MCF 10A (cell line): ENCODE measurements at regions of chr18 and their contacts with region 1.

Region 1: GRCh38 chr18:77000527-77000926 is 132.1 kb downstream of the MBP start:
- DNase-seq: peak; percentile 52
- H3K4me3 Mint-ChIP-seq: no peak overlapping the region
- H3K27ac Mint-ChIP-seq: no peak overlapping the region
- H3K4me1 Mint-ChIP-seq: no peaks in the 10 kb centered on the region
- H3K27me3 Mint-ChIP-seq: peaks cover 7% of the 10 kb centered on the region
- CTCF ChIP-seq: peak; percentile 89

Region 2: GRCh38 chr18:76892832-76893231 is 107.7 kb before region 1 on chr18:
- CTCF ChIA-PET with region 1: no interaction called
- POLR2A ChIA-PET with region 1: no interaction called
- intact Hi-C with region 1: no loop called
- DNase-seq: no peak
- H3K4me3 Mint-ChIP-seq: no peak overlapping the region
- H3K27ac Mint-ChIP-seq: no peak overlapping the region
- H3K4me1 Mint-ChIP-seq: no peaks in the 10 kb centered on the region
- H3K27me3 Mint-ChIP-seq: no peaks in the 10 kb centered on the region
- CTCF ChIP-seq: no peak

Region 3: DNA sequence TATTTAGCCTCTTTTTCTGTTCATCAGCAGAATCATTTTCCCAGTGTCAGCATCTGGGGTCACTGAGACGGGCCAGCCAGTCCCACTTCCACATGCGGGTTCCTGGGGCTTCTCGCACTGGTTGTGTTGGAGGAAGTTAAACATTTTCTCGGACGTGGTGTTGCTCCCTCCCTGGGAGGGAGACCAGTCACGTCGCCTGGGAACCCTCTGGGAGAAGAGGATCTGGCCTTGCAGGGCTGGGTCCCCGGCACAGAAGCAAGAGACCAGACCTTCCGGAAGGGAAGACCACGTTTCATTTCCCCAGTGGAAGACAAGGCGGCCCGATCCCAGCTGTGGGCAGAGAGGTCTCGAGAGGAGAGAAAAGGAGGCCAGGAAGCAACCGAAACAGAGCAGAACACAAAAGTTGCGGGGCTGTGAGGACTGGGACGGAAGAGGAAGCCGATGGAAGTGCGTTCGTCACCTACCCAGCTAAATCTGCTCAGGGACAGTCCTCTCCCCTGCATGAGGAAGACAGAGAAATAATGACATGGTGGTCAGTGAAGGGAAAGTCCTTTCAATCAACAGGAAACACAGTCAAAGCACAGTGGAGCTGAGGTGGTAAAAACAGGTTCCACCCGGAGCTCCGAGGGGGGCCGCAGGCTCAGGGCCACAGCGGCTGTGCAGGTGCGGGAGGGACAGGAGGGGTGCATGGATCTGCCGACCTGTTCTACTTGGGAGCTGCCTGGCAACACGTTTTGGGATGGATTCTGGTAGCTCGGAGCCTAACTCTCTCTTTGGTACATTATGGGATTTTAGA is 12.3 kb before region 1 on chr18:
- CTCF ChIA-PET with region 1: interaction called, 40 read pairs
- POLR2A ChIA-PET with region 1: no interaction called
- intact Hi-C with region 1: no loop called
- DNase-seq: no peak
- H3K4me3 Mint-ChIP-seq: no peak overlapping the region
- H3K27ac Mint-ChIP-seq: no peak overlapping the region
- H3K4me1 Mint-ChIP-seq: peaks cover 1% of the 10 kb centered on the region
- H3K27me3 Mint-ChIP-seq: peaks cover 22% of the 10 kb centered on the region
- CTCF ChIP-seq: no peak

Region 4: GRCh38 chr18:77067291-77068061 is 66.9 kb after region 1 on chr18:
- CTCF ChIA-PET with region 1: interaction called, 5 read pairs
- POLR2A ChIA-PET with region 1: interaction called, 4 read pairs
- intact Hi-C with region 1: loop called (anchors 2 kb)
- DNase-seq: peak; percentile 88
- H3K4me3 Mint-ChIP-seq: peak overlapping the region; percentile 40
- H3K27ac Mint-ChIP-seq: peak overlapping the region; percentile 88
- H3K4me1 Mint-ChIP-seq: peaks cover 50% of the 10 kb centered on the region
- H3K27me3 Mint-ChIP-seq: no peaks in the 10 kb centered on the region
- CTCF ChIP-seq: peak; percentile 17

Region 5: DNA sequence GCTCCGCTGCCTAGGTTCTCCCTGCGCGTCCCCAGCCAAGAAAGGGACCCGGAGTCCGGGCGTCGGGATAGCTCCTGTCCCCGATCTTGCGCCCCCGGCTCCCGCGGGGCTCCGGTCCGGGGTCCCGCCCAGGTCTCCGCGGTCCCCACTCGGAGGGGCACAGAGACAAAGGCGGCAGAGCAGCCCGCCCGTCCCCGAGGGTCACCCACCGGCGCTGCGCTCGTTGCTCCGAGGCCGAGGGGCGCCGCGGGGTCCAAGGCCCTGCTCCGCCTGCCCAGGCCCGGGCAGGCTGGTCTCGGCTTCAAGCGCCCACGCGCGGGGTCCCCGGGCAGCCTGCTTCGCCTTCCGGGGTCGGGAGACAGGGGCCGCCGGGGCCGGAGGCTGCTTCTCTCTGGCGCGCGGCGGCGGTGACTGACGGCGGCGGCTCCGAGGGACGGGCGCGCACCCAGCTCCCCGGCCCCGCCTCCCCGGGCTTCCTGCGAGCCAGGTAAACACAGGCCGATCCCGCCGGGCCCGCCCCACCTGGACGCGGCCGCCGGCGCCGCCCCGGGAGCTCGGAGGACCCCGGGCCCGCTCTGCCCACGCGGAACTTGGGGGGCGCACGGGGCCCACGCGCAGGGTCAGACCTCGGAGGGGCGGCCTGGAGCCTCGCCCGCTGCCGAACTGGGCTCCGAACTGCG is 132.0 kb after region 1 on chr18 and contains the start of gene MBP:
- CTCF ChIA-PET with region 1: interaction called, 4 read pairs
- POLR2A ChIA-PET with region 1: interaction called, 8 read pairs
- intact Hi-C with region 1: loop called (anchors 5 kb)
- DNase-seq: peak; percentile 73
- H3K4me3 Mint-ChIP-seq: peak within 1 kb of the TSS; percentile 82
- H3K27ac Mint-ChIP-seq: no peak within 1 kb of the TSS
- H3K4me1 Mint-ChIP-seq: peaks cover 16% of the 10 kb centered on the region
- H3K27me3 Mint-ChIP-seq: no peaks in the 10 kb centered on the region
- CTCF ChIP-seq: no peak
- total RNA-seq, gene MBP: 31.6 and 31.7 TPM in 2 replicates

Region 6: GRCh38 chr18:77478646-77479442 is 478.3 kb after region 1 on chr18:
- CTCF ChIA-PET with region 1: no interaction called
- POLR2A ChIA-PET with region 1: no interaction called
- intact Hi-C with region 1: loop called (anchors 10 kb)
- DNase-seq: peak; percentile 53
- H3K4me3 Mint-ChIP-seq: peak overlapping the region; percentile 11
- H3K27ac Mint-ChIP-seq: peak overlapping the region; percentile 17
- H3K4me1 Mint-ChIP-seq: peaks cover 18% of the 10 kb centered on the region
- H3K27me3 Mint-ChIP-seq: no peaks in the 10 kb centered on the region
- CTCF ChIP-seq: peak; percentile 34